ENCODE measurements at regions of chr20 and their contacts with region 1.

Region 1: DNA sequence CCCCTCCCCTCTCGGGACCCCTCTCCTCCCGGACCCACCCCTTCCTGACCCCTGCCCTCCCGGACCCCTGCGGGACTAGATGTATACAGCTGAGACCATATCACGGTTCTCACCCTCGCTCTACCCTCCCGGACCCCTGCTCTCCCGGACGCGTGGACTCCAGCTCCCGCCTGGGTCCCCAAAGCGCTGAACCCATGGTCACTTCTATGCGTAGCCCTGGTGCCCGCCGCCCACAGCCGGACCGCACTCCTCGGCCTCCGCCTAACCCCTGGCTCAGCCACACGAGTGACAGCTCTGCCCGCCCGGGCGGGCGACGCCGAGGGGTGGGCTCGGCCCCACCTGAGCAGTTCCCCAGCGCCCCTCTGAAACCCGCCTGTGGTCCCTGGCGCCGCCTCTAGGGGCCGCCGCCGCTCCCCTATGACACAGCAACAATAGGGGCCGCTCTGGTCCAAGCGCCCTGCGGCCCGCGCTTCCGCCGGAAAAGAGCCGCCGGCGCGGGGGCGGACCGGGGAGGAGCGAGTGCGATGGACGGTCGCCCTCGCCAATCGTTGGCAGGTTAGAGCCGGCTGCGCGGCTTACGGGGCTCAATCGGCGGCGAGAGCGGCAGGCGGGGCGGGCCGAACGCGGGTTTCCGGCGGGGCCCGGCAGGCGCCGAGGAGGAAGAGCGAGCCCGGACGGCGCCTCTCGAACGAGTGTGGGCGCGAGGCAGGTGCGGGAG is at the start of gene ADRM1:
- DNase-seq: peak; percentile 98
- ATAC-seq: peak; percentile 93
- total RNA-seq, gene ADRM1: 75.5 TPM

Region 2: DNA sequence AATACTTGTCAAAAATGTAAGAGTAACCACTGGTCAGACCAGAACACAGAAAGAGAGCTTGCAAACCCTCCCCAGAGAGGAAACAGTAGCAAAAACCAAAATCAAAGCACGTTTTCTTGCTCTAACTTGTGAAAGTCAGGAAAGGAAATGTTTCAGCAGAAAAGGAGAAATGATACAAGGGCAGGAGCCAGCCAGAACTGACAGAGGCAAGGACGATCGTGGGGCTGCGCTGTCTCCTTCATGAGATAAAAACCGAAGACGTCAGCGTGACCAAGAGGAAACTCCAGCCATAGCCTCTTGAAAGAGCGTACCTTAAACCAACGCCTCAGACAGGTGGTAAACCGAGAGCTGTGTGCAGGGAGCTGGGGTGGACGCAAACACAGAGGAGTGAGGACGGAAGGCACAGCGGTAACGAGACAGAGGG is 37.2 kb after region 1 on chr20:
- intact Hi-C with region 1: no loop called
- DNase-seq: peak; percentile 3
- ATAC-seq: no peak

Region 3: GRCh38 chr20:62382306-62383198 is 80.1 kb after region 1 on chr20:
- intact Hi-C with region 1: loop called (anchors 5 kb)
- DNase-seq: peak; percentile 84
- ATAC-seq: peak; percentile 68